ENCODE measurements at regions of chr4 and their contacts with region 1.

Region 1: DNA sequence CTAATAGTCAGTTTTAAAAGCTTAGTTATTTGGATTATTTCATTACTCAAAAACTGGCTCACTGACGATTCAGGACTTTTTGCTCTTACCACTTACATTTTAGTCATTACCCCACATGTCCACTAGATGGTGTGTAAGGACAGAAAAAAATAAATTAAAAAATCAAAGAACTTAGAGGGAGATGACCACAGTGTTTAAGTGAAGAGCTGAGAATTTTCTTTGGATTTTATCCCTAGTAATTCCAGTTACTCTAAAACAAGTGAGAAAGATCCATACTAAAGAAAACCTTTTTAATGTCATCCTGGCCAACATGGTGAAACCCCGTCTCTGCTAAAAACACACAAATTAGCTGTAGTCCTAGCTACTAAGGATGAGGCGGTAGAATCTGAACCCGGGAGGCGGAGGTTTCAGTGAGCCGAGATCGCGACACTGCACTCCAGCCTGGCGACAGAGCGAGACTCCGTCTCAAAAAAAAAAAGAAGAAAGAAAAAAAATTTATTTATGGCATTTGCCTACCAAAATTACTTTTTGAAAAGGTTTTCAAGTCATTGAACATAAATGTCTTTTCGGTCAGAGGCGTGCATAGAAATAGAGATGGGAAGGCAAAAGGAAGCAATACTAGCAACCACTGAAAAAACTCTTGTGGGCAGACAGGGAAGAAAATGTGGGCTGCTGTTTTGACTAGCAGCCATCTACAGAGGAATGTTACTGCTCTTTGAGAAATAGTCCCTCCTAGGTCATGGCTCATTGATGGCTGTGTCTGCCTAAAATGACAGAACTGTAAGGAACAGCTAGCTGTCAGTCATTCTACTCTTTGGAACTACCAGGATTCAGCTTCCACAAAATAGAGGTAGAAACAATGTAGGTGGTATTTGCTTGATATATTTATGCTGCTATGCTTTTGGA is 26.6 kb upstream of the TMPRSS11B start:
- DNase-seq: peak; percentile 42
- H3K4me3 ChIP-seq: peak overlapping the region; percentile 18
- H3K27ac ChIP-seq: no peak overlapping the region
- H3K4me1 ChIP-seq: no peaks in the 10 kb centered on the region
- CTCF ChIP-seq: peak; percentile 86

Region 2: GRCh38 chr4:68299492-68300457 is 27.7 kb after region 1 on chr4:
- CTCF ChIA-PET with region 1: no interaction called
- POLR2A ChIA-PET with region 1: no interaction called
- intact Hi-C with region 1: no loop called
- DNase-seq: no peak
- H3K4me3 ChIP-seq: no peak overlapping the region
- H3K27ac ChIP-seq: no peak overlapping the region
- H3K4me1 ChIP-seq: no peaks in the 10 kb centered on the region
- CTCF ChIP-seq: no peak

Region 3: GRCh38 chr4:68375667-68376559 is 103.8 kb after region 1 on chr4:
- CTCF ChIA-PET with region 1: interaction called, 8 read pairs
- POLR2A ChIA-PET with region 1: interaction called, 3 read pairs
- intact Hi-C with region 1: loop called (anchors 1 kb)
- DNase-seq: peak; percentile 65
- H3K4me3 ChIP-seq: no peak overlapping the region
- H3K27ac ChIP-seq: no peak overlapping the region
- H3K4me1 ChIP-seq: no peaks in the 10 kb centered on the region
- CTCF ChIP-seq: peak; percentile 89